Activated CD8-positive, alpha-beta memory T cell treated with anti-CD3 and anti-CD28 coated beads, Interleukin-2, amount 10 ng/mL, durations not matched to agents 7 days and 5 days (primary cell): ENCODE measurements at regions of chr7 and their contacts with region 1.

Region 1: DNA sequence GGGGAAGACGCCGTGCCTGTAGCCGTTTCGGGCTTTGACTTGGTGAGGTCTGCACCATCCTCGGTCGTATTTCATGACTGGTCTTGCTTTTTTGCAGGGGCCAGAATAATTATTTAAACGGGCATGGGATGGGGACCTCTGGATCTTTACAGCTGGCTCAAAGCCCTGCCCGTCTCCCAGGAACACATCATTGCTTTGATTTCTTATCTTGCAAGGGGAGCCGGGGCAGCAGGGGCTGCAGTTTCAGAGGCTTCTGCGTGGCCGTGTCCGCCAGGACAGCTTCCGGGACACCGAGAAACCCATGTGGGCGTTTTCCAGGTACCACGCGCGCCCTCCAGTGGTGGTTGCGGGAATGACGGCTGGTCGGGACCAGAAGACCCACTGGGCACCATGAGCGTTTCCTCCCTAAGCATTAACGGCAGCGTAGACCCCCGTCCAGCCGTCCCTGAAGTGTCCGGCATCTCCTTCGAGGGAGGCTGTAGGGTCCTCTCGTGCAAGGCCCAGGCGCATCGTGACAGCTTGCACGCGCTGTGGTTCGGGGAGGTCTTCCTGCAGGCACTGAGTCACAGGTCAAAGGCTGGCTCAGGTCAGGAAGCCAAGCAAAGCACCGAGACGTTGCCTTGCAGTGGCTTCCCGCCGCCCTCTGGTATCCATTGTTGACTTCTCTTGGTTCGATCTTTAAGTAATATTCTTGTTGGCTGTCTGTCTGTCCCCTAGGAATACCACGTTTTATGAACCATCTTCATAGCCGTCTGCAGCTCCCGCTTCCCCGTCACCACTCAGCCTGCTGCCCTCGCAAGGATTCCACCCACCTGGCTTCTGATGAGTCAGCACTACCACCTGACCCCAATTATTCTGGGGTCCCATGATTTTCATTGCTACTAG is 16.2 kb upstream of the ZFAND2A start:
- DNase-seq: peak; percentile 90
- ATAC-seq: peak; percentile 84
- H3K4me3 Mint-ChIP-seq: peak overlapping the region; percentile 51
- H3K27ac Mint-ChIP-seq: peak overlapping the region; percentile 87
- H3K4me1 Mint-ChIP-seq: peaks cover 14% of the 10 kb centered on the region
- H3K27me3 Mint-ChIP-seq: peaks cover 15% of the 10 kb centered on the region

Region 2: DNA sequence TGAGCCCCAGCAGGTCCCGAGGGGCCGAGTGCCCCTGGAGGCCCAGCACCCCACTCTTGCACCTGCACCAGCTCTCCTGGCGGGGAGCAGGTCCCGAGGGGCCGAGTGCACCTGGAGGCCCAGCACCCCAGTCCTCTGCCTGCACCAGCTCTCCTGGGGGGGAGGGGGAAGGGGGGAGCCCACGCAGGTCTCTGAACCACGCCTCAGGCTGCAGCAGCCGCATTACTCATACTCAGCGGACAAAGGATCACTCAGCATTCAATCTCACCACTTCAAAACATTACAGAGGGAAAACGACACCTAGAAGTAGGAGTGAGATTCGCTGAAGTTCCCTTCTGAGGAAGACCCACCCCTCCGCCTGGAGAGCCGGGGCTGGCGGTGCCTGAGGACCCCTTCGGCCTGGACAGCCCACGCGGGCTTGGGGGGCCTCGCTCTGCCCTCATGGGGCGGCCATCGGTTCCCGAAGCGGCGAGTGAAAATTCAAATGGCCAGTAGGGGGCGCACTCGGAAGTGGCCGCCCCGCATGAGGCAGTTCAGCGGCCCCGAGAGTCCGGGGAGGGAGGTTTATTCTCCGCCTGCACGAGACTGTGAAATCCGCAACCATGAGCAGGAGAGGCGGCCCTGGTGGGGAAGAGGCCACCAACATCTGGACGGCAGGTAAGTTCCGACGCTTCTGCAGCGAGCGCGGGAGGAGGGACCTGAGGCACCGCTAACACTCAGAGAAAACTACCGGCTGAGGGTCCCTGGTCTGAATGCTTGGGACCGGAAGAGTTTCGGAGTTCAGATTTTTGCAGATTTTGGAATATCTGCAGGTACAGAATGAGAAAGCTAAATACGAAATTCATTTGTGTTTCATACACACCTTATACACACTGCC is 89.4 kb before region 1 on chr7:
- CTCF ChIA-PET with region 1: interaction called, 69 read pairs
- DNase-seq: peak; percentile 82
- ATAC-seq: peak; percentile 92
- H3K4me3 Mint-ChIP-seq: peak overlapping the region; percentile 56
- H3K27ac Mint-ChIP-seq: no peak overlapping the region
- H3K4me1 Mint-ChIP-seq: peaks cover 7% of the 10 kb centered on the region
- H3K27me3 Mint-ChIP-seq: peaks cover 6% of the 10 kb centered on the region

Region 3: GRCh38 chr7:1103009-1103788 is 73.0 kb before region 1 on chr7:
- CTCF ChIA-PET with region 1: interaction called, 19 read pairs
- DNase-seq: peak; percentile 67
- ATAC-seq: peak; percentile 79
- H3K4me3 Mint-ChIP-seq: peak overlapping the region; percentile 60
- H3K27ac Mint-ChIP-seq: peak overlapping the region; percentile 83
- H3K4me1 Mint-ChIP-seq: peaks cover 28% of the 10 kb centered on the region
- H3K27me3 Mint-ChIP-seq: no peaks in the 10 kb centered on the region

Region 4: DNA sequence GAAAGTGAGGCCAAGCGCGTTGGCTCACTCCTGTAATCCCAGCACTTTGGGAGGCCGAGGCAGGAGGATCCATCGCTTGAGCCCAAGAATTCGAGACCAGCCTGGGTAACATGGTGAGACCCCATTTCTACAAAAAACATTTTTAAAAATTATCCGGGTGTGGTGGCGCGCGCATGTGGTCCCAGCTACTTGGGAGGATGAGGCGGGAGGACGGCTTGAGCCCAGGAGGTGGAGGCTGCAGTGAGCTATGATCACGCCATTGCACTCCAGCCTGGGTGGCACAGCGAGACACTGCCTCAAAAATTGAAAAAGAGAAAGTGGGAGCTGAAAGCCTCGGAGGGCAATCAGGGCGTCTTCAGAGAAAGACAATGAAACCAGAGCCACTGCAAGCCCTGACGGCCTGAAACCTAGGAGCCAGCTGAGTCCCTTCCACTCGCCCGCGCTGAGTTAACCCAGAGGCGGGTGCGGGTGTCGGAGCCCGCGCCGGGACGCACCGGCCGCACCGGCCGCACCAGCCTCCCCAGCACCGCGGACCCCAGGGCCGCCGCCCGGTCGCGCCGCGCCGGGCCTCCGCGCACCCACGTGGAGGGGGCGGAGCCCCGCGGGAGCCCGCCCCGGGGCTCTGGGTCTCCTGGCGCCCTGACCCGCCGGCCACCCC is 38.6 kb before region 1 on chr7:
- CTCF ChIA-PET with region 1: interaction called, 33 read pairs
- DNase-seq: no peak
- ATAC-seq: peak; percentile 83
- H3K4me3 Mint-ChIP-seq: peak overlapping the region; percentile 79
- H3K27ac Mint-ChIP-seq: peak overlapping the region; percentile 81
- H3K4me1 Mint-ChIP-seq: peaks cover 16% of the 10 kb centered on the region
- H3K27me3 Mint-ChIP-seq: no peaks in the 10 kb centered on the region

Region 5: GRCh38 chr7:1159891-1160668 is 16.1 kb before region 1 on chr7 and contains the start of gene ZFAND2A:
- CTCF ChIA-PET with region 1: interaction called, 44 read pairs
- DNase-seq: peak; percentile 99
- ATAC-seq: peak; percentile 98
- H3K4me3 Mint-ChIP-seq: peak within 1 kb of the TSS; percentile 86
- H3K27ac Mint-ChIP-seq: peak within 1 kb of the TSS; percentile 86
- H3K4me1 Mint-ChIP-seq: peaks cover 27% of the 10 kb centered on the region
- H3K27me3 Mint-ChIP-seq: no peaks in the 10 kb centered on the region
- total RNA-seq, gene ZFAND2A: 23.8 to 23.9 TPM

Region 6: GRCh38 chr7:1187127-1187526 is 10.9 kb after region 1 on chr7:
- CTCF ChIA-PET with region 1: interaction called, 52 read pairs
- DNase-seq: no peak
- ATAC-seq: no peak
- H3K4me3 Mint-ChIP-seq: no peak overlapping the region
- H3K27ac Mint-ChIP-seq: no peak overlapping the region
- H3K4me1 Mint-ChIP-seq: peaks cover 15% of the 10 kb centered on the region
- H3K27me3 Mint-ChIP-seq: peaks cover 43% of the 10 kb centered on the region